ENCODE measurements at regions of chr3 and their contacts with region 1.

Region 1: GRCh38 chr3:131283862-131284261 is 97.7 kb upstream of the NUDT16 start:
- DNase-seq: no peak
- CTCF ChIP-seq: no peak

Region 2: GRCh38 chr3:131273401-131273800 is 10.5 kb before region 1 on chr3:
- CTCF ChIA-PET with region 1: interaction called, 15 read pairs
- POLR2A ChIA-PET with region 1: no interaction called
- DNase-seq: no peak
- CTCF ChIP-seq: no peak

Region 3: GRCh38 chr3:131502530-131503245 is 218.8 kb after region 1 on chr3 and contains the start of gene MRPL3:
- CTCF ChIA-PET with region 1: no interaction called
- POLR2A ChIA-PET with region 1: no interaction called
- DNase-seq: peak; percentile 84
- CTCF ChIP-seq: no peak